ENCODE measurements at regions of chr3 and their contacts with region 1.

Region 1: GRCh38 chr3:63349583-63350521 is 71.7 kb downstream of the SYNPR start:
- DNase-seq: no peak
- H3K4me3 ChIP-seq: no peak overlapping the region
- H3K27ac ChIP-seq: no peak overlapping the region
- H3K27me3 ChIP-seq: peaks cover 5% of the 10 kb centered on the region
- CTCF ChIP-seq: peak; percentile 90

Region 2: GRCh38 chr3:63364910-63365431 is 15.1 kb after region 1 on chr3:
- CTCF ChIA-PET with region 1: interaction called, 19 read pairs
- POLR2A ChIA-PET with region 1: no interaction called
- DNase-seq: no peak
- H3K4me3 ChIP-seq: no peak overlapping the region
- H3K27ac ChIP-seq: no peak overlapping the region
- H3K27me3 ChIP-seq: no peaks in the 10 kb centered on the region
- CTCF ChIP-seq: no peak

Region 3: DNA sequence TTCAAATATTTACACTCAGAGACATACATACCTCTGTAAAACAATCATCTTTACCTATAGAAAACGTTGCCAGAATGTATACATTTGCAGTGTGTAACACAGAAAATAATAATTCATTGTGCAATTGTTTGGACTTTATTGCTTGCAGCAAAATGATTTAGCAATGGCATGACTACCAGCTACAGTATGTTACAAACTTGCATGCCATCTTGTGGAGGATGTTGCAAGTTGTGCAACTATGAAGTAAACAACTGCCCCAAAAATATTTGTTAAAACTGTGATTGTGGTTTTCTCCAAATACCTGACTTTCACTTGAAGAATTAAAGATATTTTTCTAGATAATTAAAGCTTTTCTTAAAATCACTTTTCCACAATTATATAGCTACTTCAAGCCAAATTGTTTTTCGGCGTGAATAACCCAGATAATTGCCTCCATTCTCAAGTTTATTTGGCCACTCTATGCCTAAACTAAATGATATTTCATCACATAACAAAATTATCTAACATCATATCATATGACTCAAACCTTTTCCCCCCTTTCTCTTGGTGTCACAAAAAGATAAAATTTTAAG is 442.2 kb after region 1 on chr3:
- CTCF ChIA-PET with region 1: interaction called, 29 read pairs
- POLR2A ChIA-PET with region 1: no interaction called
- DNase-seq: no peak
- H3K4me3 ChIP-seq: no peak overlapping the region
- H3K27ac ChIP-seq: no peak overlapping the region
- H3K27me3 ChIP-seq: peaks cover 3% of the 10 kb centered on the region
- CTCF ChIP-seq: peak; percentile 40

Region 4: DNA sequence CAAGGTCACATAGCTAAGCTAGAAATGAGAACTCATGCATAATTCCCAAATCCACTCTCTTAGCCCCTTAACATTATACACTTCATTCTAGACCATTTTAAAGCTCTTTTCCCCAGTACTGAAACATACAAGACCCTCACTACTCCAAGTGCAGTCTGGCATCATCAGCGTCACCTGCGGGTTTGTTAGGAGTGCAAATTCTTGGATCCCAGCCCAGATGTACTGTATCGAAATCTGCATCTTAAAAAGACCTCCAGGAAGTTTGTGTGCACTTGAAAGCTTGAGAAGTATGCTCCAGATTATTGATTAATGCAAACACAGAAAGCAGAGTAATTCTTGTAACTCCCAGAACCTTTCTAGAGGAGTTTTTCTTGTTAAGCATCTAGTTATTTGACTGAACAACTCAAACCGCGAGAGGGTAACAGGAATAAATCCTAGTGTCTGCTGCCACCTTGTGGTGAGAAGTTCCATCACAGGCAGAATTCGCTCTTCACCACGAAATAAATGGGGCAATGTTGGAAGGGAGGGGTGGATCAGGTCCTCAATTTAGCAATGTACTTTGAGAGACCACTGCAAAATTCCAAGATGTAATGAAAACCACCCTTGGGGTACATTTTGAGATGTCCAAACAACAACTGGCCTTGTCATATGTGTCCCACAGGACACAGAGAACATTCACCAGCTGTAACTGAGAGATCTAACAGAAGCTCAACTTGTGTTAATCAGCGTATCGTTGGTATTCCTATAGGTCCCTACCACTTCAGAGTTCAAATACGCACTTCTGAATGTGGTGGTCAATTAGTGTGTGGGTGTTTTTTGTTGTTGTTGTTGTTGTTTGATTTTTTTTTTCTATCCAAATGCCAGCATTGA is 468.7 kb after region 1 on chr3:
- CTCF ChIA-PET with region 1: interaction called, 413 read pairs
- POLR2A ChIA-PET with region 1: interaction called, 3 read pairs
- DNase-seq: peak; percentile 38
- H3K4me3 ChIP-seq: no peak overlapping the region
- H3K27ac ChIP-seq: no peak overlapping the region
- H3K27me3 ChIP-seq: no peaks in the 10 kb centered on the region
- CTCF ChIP-seq: peak; percentile 82

Region 5: DNA sequence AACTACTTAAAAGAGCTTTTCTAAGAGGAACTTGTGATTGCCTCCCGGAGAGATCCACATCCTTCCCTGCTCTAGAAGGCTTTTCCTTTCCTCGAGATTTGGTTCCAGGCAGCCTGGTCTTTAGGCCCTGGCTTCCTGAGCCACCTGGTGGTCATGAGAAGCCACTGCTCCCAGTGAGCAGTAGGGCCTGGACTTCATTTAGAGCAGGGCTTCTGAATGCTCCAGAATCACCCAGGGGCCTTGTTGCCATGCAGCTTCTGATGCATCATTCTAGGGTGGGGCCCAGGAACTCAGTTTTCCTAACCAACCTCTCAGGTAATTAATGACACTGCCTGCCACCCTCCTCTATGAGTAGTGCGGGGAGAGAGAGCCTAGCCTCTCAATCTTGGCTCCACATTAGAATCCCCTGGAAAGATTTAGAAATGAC is 643.8 kb after region 1 on chr3:
- CTCF ChIA-PET with region 1: interaction called, 73 read pairs
- POLR2A ChIA-PET with region 1: no interaction called
- DNase-seq: peak; percentile 47
- H3K4me3 ChIP-seq: no peak overlapping the region
- H3K27ac ChIP-seq: no peak overlapping the region
- H3K27me3 ChIP-seq: no peaks in the 10 kb centered on the region
- CTCF ChIP-seq: peak; percentile 99